ENCODE measurements at regions of chr4 and their contacts with region 1.

Region 1: DNA sequence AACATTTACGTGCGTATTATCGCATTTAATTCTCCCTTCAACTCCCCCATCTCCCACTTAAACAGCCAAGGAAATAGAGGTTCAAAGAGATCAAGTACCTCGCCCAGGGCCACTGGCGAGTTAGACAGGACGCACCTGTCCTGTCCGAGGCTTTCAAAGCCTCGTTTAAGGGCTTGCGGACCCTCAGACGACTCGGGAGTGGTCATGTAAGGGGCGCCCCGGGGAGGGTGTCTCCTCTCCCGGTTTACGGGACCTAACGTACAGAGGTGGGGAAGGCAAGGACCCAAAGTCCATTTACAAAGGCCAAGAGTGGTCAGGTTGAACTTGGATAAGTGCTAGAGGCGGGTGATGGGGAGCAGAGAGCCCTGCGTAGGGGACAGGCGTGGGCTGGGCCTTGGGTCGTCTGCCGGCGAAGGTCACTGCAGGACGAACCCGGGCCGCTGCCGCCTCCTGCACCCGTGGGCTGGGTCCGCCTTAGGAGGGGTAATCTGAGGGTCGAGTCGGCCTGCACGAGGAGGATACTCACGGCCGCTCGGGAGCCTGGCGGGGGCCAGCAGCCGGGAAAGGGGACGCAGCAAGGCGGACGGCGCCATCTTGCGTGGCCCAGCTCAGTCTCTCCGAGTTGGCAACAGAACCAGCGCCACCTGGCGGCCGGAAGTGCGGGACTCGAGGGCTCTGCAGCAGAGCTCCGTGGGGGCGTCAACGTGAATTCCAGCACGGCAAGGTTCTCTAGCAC is 5.9 kb upstream of the NAA15 start:
- DNase-seq: peak; percentile 91
- ATAC-seq: peak; percentile 97
- H3K4me3 ChIP-seq: peak overlapping the region; percentile 89
- H3K27ac ChIP-seq: peak overlapping the region; percentile 97
- H3K4me1 ChIP-seq: peaks cover 4% of the 10 kb centered on the region; the same call in 1 of the 2 replicates
- H3K27me3 ChIP-seq: no peaks in the 10 kb centered on the region
- CTCF ChIP-seq: peak; percentile 98
- POLR2A ChIP-seq: 0 out of 2 replicates have a peak, but pooled peaks have one; percentile 61
- RAD21 ChIP-seq: peak; percentile 86

Region 2: GRCh38 chr4:139030614-139031235 is 264.6 kb before region 1 on chr4:
- CTCF ChIA-PET with region 1: interaction called, 13 read pairs
- POLR2A ChIA-PET with region 1: no interaction called
- dilution Hi-C with region 1: no loop called
- in situ Hi-C with region 1: no loop called
- intact Hi-C with region 1: loop called (anchors 1 kb)
- DNase-seq: peak; percentile 83
- ATAC-seq: peak; percentile 51
- H3K4me3 ChIP-seq: no peak overlapping the region
- H3K27ac ChIP-seq: no peak overlapping the region
- H3K4me1 ChIP-seq: peaks cover 9% of the 10 kb centered on the region
- H3K27me3 ChIP-seq: no peaks in the 10 kb centered on the region
- CTCF ChIP-seq: peak; percentile 89
- POLR2A ChIP-seq: 0 out of 2 replicates have a peak, but pooled peaks have one; percentile 33
- RAD21 ChIP-seq: peak; percentile 85

Region 3: DNA sequence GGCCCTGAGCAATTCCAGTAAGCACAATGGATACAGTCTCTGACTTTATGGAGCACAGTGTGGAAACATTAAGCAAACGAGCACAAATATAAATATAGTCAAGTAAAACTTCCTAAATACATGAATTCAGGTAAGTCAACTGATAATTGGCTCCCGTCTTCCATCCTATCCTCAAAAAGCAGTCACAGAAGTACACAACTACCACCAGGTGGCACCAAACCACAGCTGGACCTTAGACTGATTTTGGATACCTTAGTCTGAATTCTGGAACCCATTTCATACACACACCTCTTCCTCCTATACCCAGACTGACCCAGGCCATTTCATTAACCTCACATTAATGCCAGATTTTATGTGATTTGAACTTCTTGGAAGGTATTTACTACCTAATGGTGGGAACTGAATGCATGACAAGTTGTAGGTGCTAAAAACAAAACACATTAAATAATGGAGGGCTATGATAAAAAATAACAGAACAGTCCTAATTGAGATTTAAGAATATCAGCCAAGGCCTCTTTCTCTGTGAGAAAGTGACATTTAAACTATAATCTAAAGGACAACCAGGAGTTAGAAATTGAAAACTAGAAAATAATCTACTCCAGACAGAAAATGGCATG is 195.9 kb before region 1 on chr4:
- CTCF ChIA-PET with region 1: no interaction called
- POLR2A ChIA-PET with region 1: no interaction called
- dilution Hi-C with region 1: no loop called
- in situ Hi-C with region 1: loop called (anchors 10 kb)
- intact Hi-C with region 1: loop called (anchors 1 kb)
- DNase-seq: peak; percentile 86
- ATAC-seq: peak; percentile 79; the same call in 1 of the 2 replicates
- H3K4me3 ChIP-seq: no peak overlapping the region
- H3K27ac ChIP-seq: no peak overlapping the region
- H3K4me1 ChIP-seq: no peaks in the 10 kb centered on the region
- H3K27me3 ChIP-seq: no peaks in the 10 kb centered on the region
- CTCF ChIP-seq: peak; percentile 85
- POLR2A ChIP-seq: 0 out of 2 replicates have a peak, but pooled peaks have one; percentile 23
- RAD21 ChIP-seq: peak; percentile 93

Region 4: GRCh38 chr4:139108567-139109128 is 186.7 kb before region 1 on chr4:
- CTCF ChIA-PET with region 1: no interaction called
- POLR2A ChIA-PET with region 1: no interaction called
- dilution Hi-C with region 1: no loop called
- in situ Hi-C with region 1: loop called (anchors 10 kb)
- intact Hi-C with region 1: no loop called
- DNase-seq: no peak
- ATAC-seq: no peak
- H3K4me3 ChIP-seq: no peak overlapping the region
- H3K27ac ChIP-seq: no peak overlapping the region
- H3K4me1 ChIP-seq: no peaks in the 10 kb centered on the region
- H3K27me3 ChIP-seq: no peaks in the 10 kb centered on the region
- CTCF ChIP-seq: no peak
- POLR2A ChIP-seq: no peak
- RAD21 ChIP-seq: no peak

Region 5: GRCh38 chr4:139177868-139178611 is 117.3 kb before region 1 on chr4:
- CTCF ChIA-PET with region 1: no interaction called
- POLR2A ChIA-PET with region 1: no interaction called
- dilution Hi-C with region 1: no loop called
- in situ Hi-C with region 1: loop called (anchors 10 kb)
- intact Hi-C with region 1: loop called (anchors 2 kb)
- DNase-seq: peak; percentile 91
- ATAC-seq: peak; percentile 78
- H3K4me3 ChIP-seq: peak overlapping the region; percentile 88
- H3K27ac ChIP-seq: peak overlapping the region; percentile 75
- H3K4me1 ChIP-seq: peaks cover 2% of the 10 kb centered on the region; the same call in 1 of the 2 replicates
- H3K27me3 ChIP-seq: no peaks in the 10 kb centered on the region
- CTCF ChIP-seq: no peak
- POLR2A ChIP-seq: peak; percentile 60; the same call in 1 of the 2 replicates
- RAD21 ChIP-seq: peak; percentile 5; the same call in 1 of the 2 replicates

Region 6: GRCh38 chr4:139184129-139184528 is 111.2 kb before region 1 on chr4:
- CTCF ChIA-PET with region 1: no interaction called
- POLR2A ChIA-PET with region 1: no interaction called
- dilution Hi-C with region 1: no loop called
- in situ Hi-C with region 1: loop called (anchors 10 kb)
- intact Hi-C with region 1: no loop called
- DNase-seq: peak; percentile 70
- ATAC-seq: peak; percentile 71
- H3K4me3 ChIP-seq: no peak overlapping the region
- H3K27ac ChIP-seq: no peak overlapping the region
- H3K4me1 ChIP-seq: no peaks in the 10 kb centered on the region
- H3K27me3 ChIP-seq: no peaks in the 10 kb centered on the region
- CTCF ChIP-seq: peak; percentile 50
- POLR2A ChIP-seq: no peak
- RAD21 ChIP-seq: peak; percentile 54

Region 7: GRCh38 chr4:139229534-139230039 is 65.8 kb before region 1 on chr4:
- CTCF ChIA-PET with region 1: interaction called, 5 read pairs
- POLR2A ChIA-PET with region 1: no interaction called
- dilution Hi-C with region 1: no loop called
- in situ Hi-C with region 1: loop called (anchors 5 kb)
- intact Hi-C with region 1: loop called (anchors 1 kb)
- DNase-seq: peak; percentile 68
- ATAC-seq: peak; percentile 89
- H3K4me3 ChIP-seq: no peak overlapping the region
- H3K27ac ChIP-seq: no peak overlapping the region
- H3K4me1 ChIP-seq: no peaks in the 10 kb centered on the region
- H3K27me3 ChIP-seq: no peaks in the 10 kb centered on the region
- CTCF ChIP-seq: peak; percentile 76
- POLR2A ChIP-seq: no peak
- RAD21 ChIP-seq: peak; percentile 69

Region 8: GRCh38 chr4:139253713-139254112 is 41.7 kb before region 1 on chr4:
- CTCF ChIA-PET with region 1: no interaction called
- POLR2A ChIA-PET with region 1: no interaction called
- dilution Hi-C with region 1: no loop called
- in situ Hi-C with region 1: no loop called
- intact Hi-C with region 1: no loop called
- DNase-seq: no peak
- ATAC-seq: no peak
- H3K4me3 ChIP-seq: no peak overlapping the region
- H3K27ac ChIP-seq: no peak overlapping the region
- H3K4me1 ChIP-seq: peaks cover 2% of the 10 kb centered on the region; the same call in 1 of the 2 replicates
- H3K27me3 ChIP-seq: no peaks in the 10 kb centered on the region
- CTCF ChIP-seq: no peak
- POLR2A ChIP-seq: no peak
- RAD21 ChIP-seq: no peak

Measured in IMR-90 (cell line).